H1 (cell line): ENCODE measurements at regions of chr18 and their contacts with region 1.

Region 1: GRCh38 chr18:40935423-40935822 is 1019.6 kb upstream of the PIK3C3 start:
- DNase-seq: no peak
- H3K4me3 ChIP-seq: no peak overlapping the region
- H3K27ac ChIP-seq: no peak overlapping the region
- H3K4me1 ChIP-seq: no peaks in the 10 kb centered on the region
- H3K27me3 ChIP-seq: peaks cover 0 to 1% (median 0%) of the 10 kb centered on the region in 4 experiments; a peak in 1 of 7 replicates
- CTCF ChIP-seq: peak in 2 of 3 experiments; percentile 46 to 55; a peak in 3 of 4 replicates
- EP300 ChIP-seq: no peak
- POLR2A ChIP-seq: no peak
- RAD21 ChIP-seq: peak; percentile 45 to 61

Region 2: GRCh38 chr18:40821596-40822243 is 113.7 kb before region 1 on chr18:
- CTCF ChIA-PET with region 1: no interaction called
- POLR2A ChIA-PET with region 1: no interaction called
- DNase-seq: no peak
- H3K4me3 ChIP-seq: no peak overlapping the region
- H3K27ac ChIP-seq: no peak overlapping the region
- H3K4me1 ChIP-seq: no peaks in the 10 kb centered on the region
- H3K27me3 ChIP-seq: no peaks in the 10 kb centered on the region
- CTCF ChIP-seq: no peak
- EP300 ChIP-seq: no peak
- POLR2A ChIP-seq: no peak
- RAD21 ChIP-seq: no peak

Region 3: GRCh38 chr18:40925071-40925541 is 10.3 kb before region 1 on chr18:
- CTCF ChIA-PET with region 1: interaction called, 13 read pairs
- POLR2A ChIA-PET with region 1: no interaction called
- DNase-seq: no peak
- H3K4me3 ChIP-seq: no peak overlapping the region
- H3K27ac ChIP-seq: no peak overlapping the region
- H3K4me1 ChIP-seq: no peaks in the 10 kb centered on the region
- H3K27me3 ChIP-seq: no peaks in the 10 kb centered on the region
- CTCF ChIP-seq: no peak
- EP300 ChIP-seq: no peak
- POLR2A ChIP-seq: no peak
- RAD21 ChIP-seq: no peak

Region 4: DNA sequence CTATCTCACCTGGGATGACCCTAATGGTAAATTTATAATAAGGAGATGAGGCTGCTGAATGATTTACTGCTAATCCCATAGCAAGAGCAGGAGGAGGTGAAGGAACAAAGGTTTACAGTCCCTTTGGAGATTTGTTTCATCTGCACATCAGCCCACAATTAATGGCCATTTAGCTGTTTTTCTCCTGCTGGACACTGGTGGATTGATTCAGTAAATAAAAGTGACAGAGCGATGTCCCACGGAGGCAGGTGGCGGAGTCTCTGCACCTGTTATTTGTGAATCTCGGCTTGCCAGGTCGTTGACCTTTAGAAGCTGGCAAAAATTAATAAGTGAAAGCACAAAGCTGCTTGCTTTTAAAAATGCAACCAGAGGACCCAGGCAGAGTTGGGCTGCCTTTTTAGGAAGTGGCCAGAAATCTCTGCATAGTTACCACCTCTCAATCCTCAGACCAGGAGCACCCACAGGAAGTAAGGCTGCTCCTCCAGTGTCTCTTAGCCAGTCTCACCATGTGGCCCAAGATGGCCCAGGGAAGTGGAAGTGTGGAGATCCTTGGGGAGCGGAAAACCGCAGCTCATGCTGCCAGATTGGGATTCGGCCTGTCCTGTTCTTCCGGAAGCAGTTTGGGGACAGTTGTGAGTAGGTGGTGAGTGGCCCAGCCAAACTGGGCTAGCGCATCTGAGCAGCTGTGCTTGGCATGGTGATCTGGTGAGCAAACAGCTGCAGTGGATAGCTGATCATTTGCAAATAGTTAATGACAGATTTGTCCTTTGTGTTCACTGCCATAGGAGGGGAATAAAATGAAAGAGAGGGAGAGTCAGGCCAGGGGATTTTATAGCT is 13.9 kb after region 1 on chr18:
- CTCF ChIA-PET with region 1: interaction called, 11 read pairs
- POLR2A ChIA-PET with region 1: no interaction called
- DNase-seq: no peak
- H3K4me3 ChIP-seq: no peak overlapping the region
- H3K27ac ChIP-seq: no peak overlapping the region
- H3K4me1 ChIP-seq: peaks cover 0 to 5% (median 2%) of the 10 kb centered on the region in 4 experiments; a peak in 3 of 7 replicates
- H3K27me3 ChIP-seq: no peaks in the 10 kb centered on the region
- CTCF ChIP-seq: no peak
- EP300 ChIP-seq: no peak
- POLR2A ChIP-seq: no peak
- RAD21 ChIP-seq: no peak